ENCODE measurements at regions of chr12 and their contacts with region 1.

Region 1: DNA sequence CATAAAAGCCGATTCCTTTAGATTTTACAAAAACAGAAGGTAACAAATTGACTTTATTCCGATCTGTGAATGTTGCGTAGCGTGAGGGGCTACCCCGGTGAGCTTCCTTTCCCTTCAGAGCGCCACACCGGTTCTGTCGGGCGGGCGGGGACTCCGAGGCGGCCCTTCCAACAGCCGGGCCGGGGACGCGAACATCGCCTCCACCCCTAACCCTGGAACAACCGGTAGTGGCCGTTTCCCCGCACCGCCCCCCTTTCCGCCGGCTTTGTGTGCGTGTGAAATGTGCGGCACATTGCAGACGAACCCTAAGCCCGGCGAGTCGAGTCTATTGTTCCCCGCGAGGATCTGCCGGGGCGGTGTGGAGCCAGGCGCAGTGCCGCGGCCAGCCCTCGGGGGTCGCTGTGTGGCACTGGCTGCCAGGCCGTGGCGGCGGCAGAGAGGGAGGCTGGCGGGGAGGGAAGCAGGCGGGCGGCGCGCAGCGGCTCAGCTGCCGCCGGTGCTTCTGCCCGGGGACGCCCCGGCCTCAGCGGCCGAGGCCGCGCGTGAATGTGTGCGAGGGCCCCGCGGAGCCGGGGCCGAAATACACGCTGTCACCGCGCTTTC is 775 bp upstream of the ARID2 start:
- DNase-seq: peak; percentile 98
- H3K4me3 ChIP-seq: peak overlapping the region; percentile 69 to 97 (median 86)
- H3K27ac ChIP-seq: peak overlapping the region; percentile 99 to 100 (median 99)
- H3K4me1 ChIP-seq: peaks cover 0 to 52% (median 44%) of the 10 kb centered on the region in 4 donors
- H3K27me3 ChIP-seq: no peaks in the 10 kb centered on the region
- CTCF ChIP-seq: peak; percentile 91 to 96 (median 93)
- EP300 ChIP-seq: peak in 2 of 4 donors; percentile 2 to 25
- POLR2A ChIP-seq: peak; percentile 39 to 76

Region 2: GRCh38 chr12:45234139-45234846 is 494.4 kb before region 1 on chr12:
- intact Hi-C with region 1: loop called (anchors 5 kb)
- DNase-seq: peak; percentile 71
- H3K4me3 ChIP-seq: no peak overlapping the region
- H3K27ac ChIP-seq: peak overlapping the region; percentile 85 to 89 (median 87)
- H3K4me1 ChIP-seq: peaks cover 0 to 59% (median 56%) of the 10 kb centered on the region in 4 donors
- H3K27me3 ChIP-seq: no peaks in the 10 kb centered on the region
- CTCF ChIP-seq: no peak
- EP300 ChIP-seq: peak; percentile 2 to 83 (median 57)
- POLR2A ChIP-seq: no peak

Region 3: GRCh38 chr12:45290204-45290580 is 438.5 kb before region 1 on chr12:
- intact Hi-C with region 1: loop called (anchors 5 kb)
- DNase-seq: no peak
- H3K4me3 ChIP-seq: no peak overlapping the region
- H3K27ac ChIP-seq: peak overlapping the region; percentile 78 to 87 (median 82)
- H3K4me1 ChIP-seq: peaks cover 0 to 57% (median 41%) of the 10 kb centered on the region in 4 donors
- H3K27me3 ChIP-seq: no peaks in the 10 kb centered on the region
- CTCF ChIP-seq: no peak
- EP300 ChIP-seq: no peak
- POLR2A ChIP-seq: no peak

Region 4: GRCh38 chr12:45409966-45410365 is 318.8 kb before region 1 on chr12:
- intact Hi-C with region 1: loop called (anchors 10 kb)
- DNase-seq: no peak
- H3K4me3 ChIP-seq: no peak overlapping the region
- H3K27ac ChIP-seq: no peak overlapping the region
- H3K4me1 ChIP-seq: no peaks in the 10 kb centered on the region
- H3K27me3 ChIP-seq: no peaks in the 10 kb centered on the region
- CTCF ChIP-seq: no peak
- EP300 ChIP-seq: no peak
- POLR2A ChIP-seq: no peak

Region 5: DNA sequence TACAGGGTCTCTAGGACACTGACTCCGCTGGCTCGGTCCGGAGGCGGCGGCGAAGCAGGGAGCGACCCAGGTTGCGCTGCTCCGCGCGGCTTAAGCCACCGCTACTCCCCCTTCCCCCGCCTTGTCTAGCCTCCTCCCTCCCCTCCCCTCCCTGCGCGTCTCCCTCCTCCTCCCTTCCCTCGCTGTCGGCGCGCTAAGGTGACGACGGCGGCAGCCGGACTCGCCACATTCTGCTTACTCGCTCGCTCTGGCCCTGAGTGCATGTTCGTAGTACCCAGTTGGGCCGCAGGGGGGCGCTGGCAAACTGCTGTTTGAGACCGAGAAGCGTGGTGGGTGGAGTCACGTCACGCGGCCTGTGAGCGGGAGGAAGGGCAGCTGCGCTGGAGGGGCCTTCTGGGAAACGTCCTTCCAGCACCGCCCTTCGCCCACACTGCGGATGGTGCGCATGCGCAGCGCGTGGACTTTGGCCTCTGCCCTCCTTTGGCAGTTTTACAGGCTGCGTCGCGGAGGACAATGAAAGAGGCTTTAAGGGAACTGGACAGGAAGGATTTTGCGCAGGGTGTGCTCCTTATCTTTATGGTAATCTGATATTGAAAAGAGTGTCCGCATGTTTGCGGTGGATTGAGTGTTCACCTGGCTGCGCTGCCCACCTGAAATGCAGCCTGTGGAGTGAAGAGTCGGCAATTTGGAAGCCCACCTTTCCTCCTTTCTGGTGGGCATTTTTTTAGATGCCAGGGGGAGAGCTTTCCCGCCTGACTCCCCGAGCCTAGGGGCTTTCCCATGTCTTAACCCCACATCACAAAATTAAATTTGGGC is 261.9 kb after region 1 on chr12 and contains the start of gene SCAF11:
- intact Hi-C with region 1: loop called (anchors 1 kb)
- DNase-seq: peak; percentile 100
- H3K4me3 ChIP-seq: peak within 1 kb of the TSS; percentile 71 to 92 (median 82)
- H3K27ac ChIP-seq: peak within 1 kb of the TSS; percentile 96 to 99 (median 98)
- H3K4me1 ChIP-seq: peaks cover 0 to 45% (median 36%) of the 10 kb centered on the region in 4 donors
- H3K27me3 ChIP-seq: no peaks in the 10 kb centered on the region
- CTCF ChIP-seq: peak; percentile 89 to 99 (median 96)
- EP300 ChIP-seq: peak in 2 of 4 donors; percentile 22 to 80
- POLR2A ChIP-seq: peak; percentile 90 to 95
- total RNA-seq, gene SCAF11: 116 to 165 (median 127) TPM

Region 6: GRCh38 chr12:46382964-46383653 is 654.4 kb after region 1 on chr12:
- intact Hi-C with region 1: loop called (anchors 5 kb)
- DNase-seq: peak; percentile 99
- H3K4me3 ChIP-seq: peak overlapping the region; percentile 66 to 80 (median 74)
- H3K27ac ChIP-seq: peak overlapping the region; percentile 97 to 100 (median 99)
- H3K4me1 ChIP-seq: peaks cover 0 to 51% (median 45%) of the 10 kb centered on the region in 4 donors
- H3K27me3 ChIP-seq: no peaks in the 10 kb centered on the region
- CTCF ChIP-seq: no peak
- EP300 ChIP-seq: peak in 1 of 4 donors; percentile 89
- POLR2A ChIP-seq: peak in 1 of 2 donors; percentile 51